H1 (cell line): ENCODE measurements at regions of chr11 and their contacts with region 1.

Region 1: DNA sequence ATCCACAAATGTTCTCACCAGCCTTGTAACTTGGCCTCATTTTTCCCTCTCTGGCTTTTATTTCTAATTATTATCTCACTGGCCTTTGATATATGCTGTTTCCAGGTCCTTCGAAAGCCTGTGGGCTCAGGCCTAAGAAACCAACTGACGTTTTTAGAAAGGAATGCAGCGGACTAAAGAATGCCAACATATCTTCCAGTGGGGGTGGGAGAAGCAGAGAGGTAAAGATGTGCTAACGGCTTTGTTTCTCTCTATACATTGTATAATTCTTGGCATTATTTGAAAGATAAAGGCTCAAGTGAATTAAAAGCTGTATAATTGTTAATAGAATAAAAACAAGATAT is 28.2 kb downstream of the OR6Q1 start:
- DNase-seq: no peak
- H3K4me3 ChIP-seq: no peak overlapping the region
- H3K27ac ChIP-seq: peak overlapping the region; percentile 28
- H3K4me1 ChIP-seq: peaks cover 0 to 19% (median 16%) of the 10 kb centered on the region in 4 experiments; a peak in 6 of 7 replicates
- H3K27me3 ChIP-seq: no peaks in the 10 kb centered on the region
- CTCF ChIP-seq: no peak
- EP300 ChIP-seq: no peak
- POLR2A ChIP-seq: no peak
- RAD21 ChIP-seq: no peak; a peak in 1 of 4 replicates

Region 2: DNA sequence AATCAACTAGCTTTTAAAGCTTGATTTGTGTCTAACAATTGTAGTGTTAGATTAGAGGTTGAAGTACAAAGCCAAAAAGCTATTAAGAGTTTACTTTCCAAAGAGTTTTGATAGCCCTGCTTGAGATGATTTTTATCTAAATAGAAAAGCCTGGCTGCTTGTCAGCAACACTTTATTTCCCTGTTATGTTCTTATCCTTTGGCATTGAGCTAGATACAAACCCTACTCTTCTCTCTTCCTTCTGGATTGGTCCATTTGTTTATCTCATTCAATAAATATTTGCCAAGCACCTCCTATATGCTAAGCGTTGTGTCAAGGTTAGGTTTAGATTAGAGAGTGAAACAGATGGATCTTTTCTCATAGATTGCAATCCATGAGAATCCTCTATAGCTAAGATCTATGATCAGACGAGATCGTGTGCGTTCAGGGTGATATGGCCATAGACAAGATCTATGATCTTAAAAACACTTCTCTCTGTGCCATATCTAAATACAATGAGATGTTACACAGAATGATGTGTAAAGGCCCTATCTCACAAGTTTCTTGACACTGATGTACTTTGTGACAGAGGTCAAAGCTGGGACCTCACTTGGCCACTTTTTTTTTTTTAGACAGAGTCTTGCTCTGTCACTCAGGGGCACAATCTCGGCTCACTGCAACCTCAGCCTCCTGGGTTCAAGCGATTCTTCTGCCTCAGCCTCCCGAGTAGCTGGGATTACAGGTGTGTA is 239.6 kb before region 1 on chr11:
- CTCF ChIA-PET with region 1: interaction called, 12 read pairs
- POLR2A ChIA-PET with region 1: interaction called, 4 read pairs
- DNase-seq: no peak
- H3K4me3 ChIP-seq: no peak overlapping the region
- H3K27ac ChIP-seq: no peak overlapping the region
- H3K4me1 ChIP-seq: no peaks in the 10 kb centered on the region
- H3K27me3 ChIP-seq: no peaks in the 10 kb centered on the region
- CTCF ChIP-seq: no peak
- EP300 ChIP-seq: no peak
- POLR2A ChIP-seq: no peak
- RAD21 ChIP-seq: no peak

Region 3: DNA sequence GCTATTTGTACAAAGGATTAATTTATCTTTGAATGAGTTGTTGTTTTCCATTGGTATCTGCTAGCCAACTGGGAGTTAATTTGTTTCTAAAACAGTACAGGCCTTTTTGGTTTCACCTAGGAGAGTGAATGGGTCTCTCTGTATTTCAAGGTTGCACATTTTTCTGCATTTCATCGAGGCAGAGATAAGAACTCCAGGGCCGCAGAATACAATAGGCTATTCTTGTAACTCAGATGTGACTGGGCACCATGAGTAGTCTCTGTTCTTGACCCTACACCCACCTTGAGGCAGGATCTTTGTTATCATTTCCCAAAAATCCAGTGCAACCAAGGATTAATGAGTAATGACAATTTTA is 87.0 kb before region 1 on chr11:
- CTCF ChIA-PET with region 1: no interaction called
- POLR2A ChIA-PET with region 1: no interaction called
- DNase-seq: no peak
- H3K4me3 ChIP-seq: no peak overlapping the region
- H3K27ac ChIP-seq: no peak overlapping the region
- H3K4me1 ChIP-seq: no peaks in the 10 kb centered on the region
- H3K27me3 ChIP-seq: no peaks in the 10 kb centered on the region
- CTCF ChIP-seq: no peak
- EP300 ChIP-seq: no peak
- POLR2A ChIP-seq: no peak
- RAD21 ChIP-seq: no peak

Region 4: DNA sequence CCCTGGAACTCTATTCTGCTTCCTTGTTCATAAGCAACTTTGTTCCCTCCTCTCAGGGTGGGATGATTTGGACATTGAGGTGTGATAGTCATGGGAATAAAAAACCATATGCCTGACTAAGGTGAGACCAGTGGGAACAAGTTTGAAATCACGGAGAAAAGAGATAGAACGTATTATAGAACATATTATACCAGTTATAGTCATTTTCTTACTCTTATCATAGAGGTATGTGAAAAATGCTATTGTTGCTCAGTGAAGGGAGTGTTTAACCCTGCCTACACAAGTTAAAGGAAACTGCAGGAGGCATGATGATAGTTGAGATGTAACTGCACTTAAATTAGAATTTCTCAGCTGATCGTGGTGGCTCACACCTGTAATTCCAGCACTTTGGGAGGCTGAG is 12.7 kb before region 1 on chr11:
- CTCF ChIA-PET with region 1: interaction called, 15 read pairs
- POLR2A ChIA-PET with region 1: no interaction called
- DNase-seq: no peak
- H3K4me3 ChIP-seq: no peak overlapping the region
- H3K27ac ChIP-seq: no peak overlapping the region
- H3K4me1 ChIP-seq: no peaks in the 10 kb centered on the region
- H3K27me3 ChIP-seq: no peaks in the 10 kb centered on the region
- CTCF ChIP-seq: no peak
- EP300 ChIP-seq: no peak
- POLR2A ChIP-seq: no peak
- RAD21 ChIP-seq: no peak

Region 5: GRCh38 chr11:58524232-58525036 is 465.5 kb after region 1 on chr11:
- CTCF ChIA-PET with region 1: interaction called, 15 read pairs
- POLR2A ChIA-PET with region 1: no interaction called
- DNase-seq: peak in 1 of 2 experiments; percentile 76
- H3K4me3 ChIP-seq: peak overlapping the region in 1 of 4 experiments; percentile 45; a peak in 2 of 8 replicates
- H3K27ac ChIP-seq: no peak overlapping the region
- H3K4me1 ChIP-seq: peaks cover 0 to 3% (median 0%) of the 10 kb centered on the region in 4 experiments; a peak in 2 of 7 replicates
- H3K27me3 ChIP-seq: no peaks in the 10 kb centered on the region
- CTCF ChIP-seq: peak; percentile 84 to 96 (median 90)
- EP300 ChIP-seq: no peak
- POLR2A ChIP-seq: no peak
- RAD21 ChIP-seq: peak; percentile 70 to 80